ENCODE measurements at regions of chr14 and their contacts with region 1.

Region 1: GRCh38 chr14:104137297-104138097 is 890 bp upstream of the KIF26A start:
- DNase-seq: peak in 3 of 4 donors; percentile 46 to 91 (median 63)
- ATAC-seq: peak; percentile 93
- H3K4me3 ChIP-seq: peak overlapping the region; percentile 35 to 50
- H3K27ac ChIP-seq: peak overlapping the region in 1 of 2 donors; percentile 0
- H3K4me1 ChIP-seq: peaks cover 13 to 39% of the 10 kb centered on the region in 2 donors
- H3K27me3 ChIP-seq: peaks cover 45 to 81% of the 10 kb centered on the region in 2 donors
- CTCF ChIP-seq: peak; percentile 88 to 90

Region 2: GRCh38 chr14:103847451-103848188 is 289.9 kb before region 1 on chr14 and contains the start of gene PPP1R13B:
- intact Hi-C with region 1: no loop called
- DNase-seq: peak; percentile 87 to 95 (median 93)
- ATAC-seq: peak; percentile 97
- H3K4me3 ChIP-seq: peak within 1 kb of the TSS; percentile 57 to 63
- H3K27ac ChIP-seq: peak within 1 kb of the TSS; percentile 56 to 70
- H3K4me1 ChIP-seq: peaks cover 0 to 20% of the 10 kb centered on the region in 2 donors
- H3K27me3 ChIP-seq: peaks cover 2 to 56% of the 10 kb centered on the region in 2 donors
- CTCF ChIP-seq: no peak
- polyA plus RNA-seq, gene PPP1R13B: 53.9 to 86.9 (median 62.1) TPM

Region 3: GRCh38 chr14:104253213-104253822 is 115.8 kb after region 1 on chr14:
- intact Hi-C with region 1: no loop called
- DNase-seq: peak in 1 of 4 donors; percentile 73
- ATAC-seq: no peak
- H3K4me3 ChIP-seq: no peak overlapping the region
- H3K27ac ChIP-seq: no peak overlapping the region
- H3K4me1 ChIP-seq: no peaks in the 10 kb centered on the region
- H3K27me3 ChIP-seq: peaks cover 0 to 7% of the 10 kb centered on the region in 2 donors
- CTCF ChIP-seq: no peak

Region 4: DNA sequence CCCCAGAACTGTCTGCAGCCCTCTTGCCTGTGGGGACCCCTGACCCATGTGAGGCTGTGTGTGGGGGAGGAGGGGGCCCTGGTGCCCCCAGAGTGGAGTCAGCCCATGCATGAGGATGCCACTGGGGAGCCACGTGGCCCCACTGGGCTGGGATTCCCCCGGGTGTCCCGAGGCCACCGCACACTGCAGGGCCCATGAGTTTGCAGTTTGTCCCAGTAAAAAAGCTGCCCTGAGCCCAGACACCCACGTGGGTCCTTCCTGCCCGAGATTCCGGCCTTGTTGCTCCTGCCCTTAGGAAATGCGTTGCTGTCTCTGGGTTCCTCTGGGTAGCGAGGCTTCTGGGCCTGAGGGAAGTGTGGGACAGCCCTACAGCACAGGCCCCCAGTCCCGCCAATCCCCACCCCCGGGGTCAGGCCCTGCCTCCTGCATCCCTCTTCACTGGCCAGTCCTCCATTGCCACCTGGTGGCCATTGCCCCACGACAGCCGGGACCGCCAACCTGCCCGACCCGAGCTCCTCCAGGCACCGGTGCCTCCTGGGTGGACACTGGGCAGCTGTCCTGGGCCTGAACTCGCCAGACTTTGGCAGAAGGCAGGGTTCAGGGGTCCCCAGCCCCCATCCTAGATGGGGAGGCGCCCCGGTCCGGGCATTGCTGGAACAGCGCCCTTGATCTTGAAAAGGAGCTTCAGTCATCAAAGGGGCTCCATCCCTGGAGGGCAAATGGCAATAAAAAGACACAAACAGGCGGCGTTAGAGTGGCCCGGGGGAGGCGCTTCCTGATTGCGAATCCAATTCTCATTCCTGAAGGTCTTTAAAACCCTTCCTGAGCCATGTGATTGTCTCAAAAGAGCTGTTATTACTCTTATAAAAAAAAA is 426.5 kb after region 1 on chr14:
- intact Hi-C with region 1: loop called (anchors 5 to 10 kb)
- DNase-seq: peak in 3 of 4 donors; percentile 54 to 87 (median 77)
- ATAC-seq: peak; percentile 87
- H3K4me3 ChIP-seq: no peak overlapping the region
- H3K27ac ChIP-seq: no peak overlapping the region
- H3K4me1 ChIP-seq: peaks cover 0 to 5% of the 10 kb centered on the region in 2 donors
- H3K27me3 ChIP-seq: peaks cover 0 to 59% of the 10 kb centered on the region in 2 donors
- CTCF ChIP-seq: peak; percentile 73 to 77

Region 5: GRCh38 chr14:104639889-104640548 is 502.5 kb after region 1 on chr14:
- intact Hi-C with region 1: loop called in 1 of 2 experiments (anchors 10 kb)
- DNase-seq: peak in 3 of 4 donors; percentile 34 to 82 (median 71)
- ATAC-seq: peak; percentile 92
- H3K4me3 ChIP-seq: no peak overlapping the region
- H3K27ac ChIP-seq: no peak overlapping the region
- H3K4me1 ChIP-seq: peaks cover 0 to 3% of the 10 kb centered on the region in 2 donors
- H3K27me3 ChIP-seq: peaks cover 0 to 53% of the 10 kb centered on the region in 2 donors
- CTCF ChIP-seq: peak; percentile 82 to 90